K562 (cell line): ENCODE measurements at regions of chr16 and their contacts with region 1.

Region 1: GRCh38 chr16:67514382-67514828 is 14.2 kb upstream of the RIPOR1 start:
- DNase-seq: peak; percentile 57 to 92 (median 63)
- ATAC-seq: peak; percentile 88
- H3K4me3 ChIP-seq: no peak overlapping the region
- H3K27ac ChIP-seq: no peak overlapping the region; the same call in 2 of the 3 replicates
- H3K4me1 ChIP-seq: peaks cover 2 to 3% of the 10 kb centered on the region in 2 experiments; a peak in 3 of 5 replicates
- H3K27me3 ChIP-seq: no peaks in the 10 kb centered on the region
- CTCF ChIP-seq: peak; percentile 76 to 91 (median 79)
- EP300 ChIP-seq: no peak
- POLR2A ChIP-seq: no peak
- RAD21 ChIP-seq: peak; percentile 87 to 94

Region 2: GRCh38 chr16:67480833-67481560 is 33.4 kb before region 1 on chr16 and contains the start of gene ATP6V0D1:
- CTCF ChIA-PET with region 1: interaction called, 12 read pairs
- POLR2A ChIA-PET with region 1: interaction called, 4 read pairs
- in situ Hi-C with region 1: no loop called
- intact Hi-C with region 1: loop called (anchors 1 kb)
- DNase-seq: peak; percentile 96 to 99 (median 97)
- ATAC-seq: peak; percentile 93
- H3K4me3 ChIP-seq: peak within 1 kb of the TSS; percentile 80
- H3K27ac ChIP-seq: peak within 1 kb of the TSS; percentile 91
- H3K4me1 ChIP-seq: peaks cover 22 to 31% of the 10 kb centered on the region in 2 experiments
- H3K27me3 ChIP-seq: no peaks in the 10 kb centered on the region
- CTCF ChIP-seq: peak; percentile 90 to 98 (median 93)
- EP300 ChIP-seq: peak; percentile 27; the same call in 1 of the 2 replicates
- POLR2A ChIP-seq: peak; percentile 76
- RAD21 ChIP-seq: peak; percentile 70 to 79
- polyA plus RNA-seq, gene ATP6V0D1: 23.2 to 40.7 TPM

Region 3: DNA sequence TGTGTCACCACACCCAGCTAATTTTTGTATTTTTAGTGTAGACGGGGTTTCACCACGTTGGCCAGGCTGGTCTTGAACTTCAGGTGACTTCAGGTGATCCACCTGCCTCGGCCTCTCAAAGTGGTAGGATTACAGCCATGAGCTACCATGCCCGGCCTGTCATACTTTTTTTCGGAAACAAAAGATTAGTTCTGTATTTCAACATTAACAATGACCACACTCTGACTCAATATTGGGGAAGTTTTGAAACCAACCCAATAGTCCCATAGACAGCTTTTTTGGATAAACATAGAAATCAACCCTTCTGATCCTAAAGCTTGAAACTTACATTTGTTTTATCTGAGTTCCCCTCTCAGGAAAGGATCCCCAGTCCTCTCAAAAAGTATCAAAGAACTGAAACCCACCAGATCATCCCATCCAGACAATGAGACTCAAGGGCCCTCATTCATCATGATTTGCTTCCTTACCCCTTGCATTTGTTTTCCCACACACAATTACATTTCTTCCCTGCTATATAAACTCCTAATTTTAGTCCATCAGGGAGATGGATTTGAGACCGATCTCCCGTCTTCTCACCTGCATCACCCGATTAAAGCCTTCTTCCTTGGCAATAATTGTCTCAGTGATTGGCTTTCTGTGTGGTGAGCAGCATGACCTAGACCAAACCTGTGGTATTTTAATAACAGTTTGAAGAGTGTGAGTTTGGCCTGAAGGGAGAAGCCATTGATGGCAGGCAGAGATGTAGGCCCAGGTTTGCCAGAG is 23.9 kb before region 1 on chr16:
- CTCF ChIA-PET with region 1: interaction called, 53 read pairs
- POLR2A ChIA-PET with region 1: interaction called, 3 read pairs
- in situ Hi-C with region 1: no loop called
- intact Hi-C with region 1: loop called (anchors 1 kb)
- DNase-seq: no peak
- ATAC-seq: no peak
- H3K4me3 ChIP-seq: no peak overlapping the region
- H3K27ac ChIP-seq: no peak overlapping the region
- H3K4me1 ChIP-seq: peaks cover 0 to 3% of the 10 kb centered on the region in 2 experiments; a peak in 2 of 5 replicates
- H3K27me3 ChIP-seq: no peaks in the 10 kb centered on the region
- CTCF ChIP-seq: no peak
- EP300 ChIP-seq: no peak
- POLR2A ChIP-seq: no peak
- RAD21 ChIP-seq: no peak